ENCODE measurements at regions of chr1 and their contacts with region 1.

Region 1: GRCh38 chr1:7783826-7784491 is at the start of gene PER3:
- H3K4me3 Mint-ChIP-seq: peak within 1 kb of the TSS; percentile 82
- H3K27ac Mint-ChIP-seq: peak within 1 kb of the TSS; percentile 83
- H3K4me1 Mint-ChIP-seq: peaks cover 59% of the 10 kb centered on the region
- H3K27me3 Mint-ChIP-seq: no peaks in the 10 kb centered on the region

Region 2: GRCh38 chr1:7704214-7705047 is 79.5 kb before region 1 on chr1:
- intact Hi-C with region 1: no loop called
- H3K4me3 Mint-ChIP-seq: peak overlapping the region; percentile 76
- H3K27ac Mint-ChIP-seq: peak overlapping the region; percentile 78
- H3K4me1 Mint-ChIP-seq: peaks cover 7% of the 10 kb centered on the region
- H3K27me3 Mint-ChIP-seq: peaks cover 74% of the 10 kb centered on the region

Region 3: DNA sequence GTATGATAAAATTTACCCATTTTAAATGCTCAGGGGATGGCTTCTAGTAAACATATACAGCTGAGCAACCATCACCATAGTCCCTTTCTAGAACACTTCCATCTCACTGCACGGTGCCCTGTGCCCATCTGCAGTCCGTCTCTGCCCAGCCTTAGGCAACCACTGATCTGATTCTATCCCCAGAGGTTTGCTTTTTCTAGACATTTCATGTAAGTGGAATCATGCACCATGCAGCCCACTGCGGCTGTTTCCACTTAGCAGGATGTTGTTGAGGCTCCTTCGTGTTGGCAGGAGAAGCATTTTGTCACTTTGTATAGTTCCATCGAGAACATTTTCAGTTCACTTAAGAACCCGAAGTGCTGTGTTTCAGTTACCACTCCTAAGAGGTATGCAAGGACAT is 40.6 kb before region 1 on chr1:
- intact Hi-C with region 1: no loop called
- H3K4me3 Mint-ChIP-seq: no peak overlapping the region
- H3K27ac Mint-ChIP-seq: no peak overlapping the region
- H3K4me1 Mint-ChIP-seq: no peaks in the 10 kb centered on the region
- H3K27me3 Mint-ChIP-seq: no peaks in the 10 kb centered on the region

Region 4: GRCh38 chr1:7770997-7771822 is 12.7 kb before region 1 on chr1 and contains the start of gene VAMP3:
- intact Hi-C with region 1: loop called (anchors 1 kb)
- H3K4me3 Mint-ChIP-seq: peak within 1 kb of the TSS; percentile 94
- H3K27ac Mint-ChIP-seq: peak within 1 kb of the TSS; percentile 99
- H3K4me1 Mint-ChIP-seq: peaks cover 52% of the 10 kb centered on the region
- H3K27me3 Mint-ChIP-seq: no peaks in the 10 kb centered on the region

Region 5: DNA sequence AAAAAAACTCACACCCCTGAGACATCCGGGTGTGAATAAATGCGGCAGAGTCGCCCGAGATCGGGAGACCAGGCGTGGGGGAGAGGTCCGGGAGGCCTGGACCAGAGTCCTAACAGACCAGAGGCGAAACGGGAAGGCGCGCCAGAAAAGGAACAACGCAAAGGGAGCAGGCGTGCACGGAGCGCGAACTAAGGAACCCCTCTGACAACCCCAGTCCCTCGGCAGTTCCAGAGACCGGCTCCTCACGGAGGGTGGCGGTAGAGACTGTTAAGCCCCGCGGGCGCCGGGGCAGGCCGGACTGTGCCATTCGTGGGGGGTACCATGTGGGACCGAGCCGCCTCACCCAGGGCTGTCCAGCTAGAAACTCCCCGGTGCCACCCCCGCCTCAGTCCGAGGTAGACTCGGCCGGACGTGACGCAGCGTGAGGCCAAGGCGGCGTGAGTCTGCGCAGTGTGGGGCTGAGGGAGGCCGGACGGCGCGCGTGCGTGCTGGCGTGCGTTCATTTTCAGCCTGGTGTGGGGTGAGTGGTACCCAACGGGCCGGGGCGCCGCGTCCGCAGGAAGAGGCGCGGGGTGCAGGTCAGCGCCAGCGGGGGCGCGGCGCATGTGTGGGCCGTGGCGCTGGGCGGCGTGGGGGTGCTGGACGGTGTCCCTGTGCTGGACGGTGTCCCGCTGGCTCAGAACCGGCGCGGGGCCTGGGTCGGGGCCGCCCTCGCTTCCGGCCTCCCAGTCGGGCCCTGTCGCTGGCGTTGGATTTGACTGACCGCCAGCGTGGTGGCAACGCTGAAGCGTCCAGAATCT is 177.5 kb after region 1 on chr1 and contains the start of gene PARK7:
- intact Hi-C with region 1: loop called (anchors 5 kb)
- H3K4me3 Mint-ChIP-seq: peak within 1 kb of the TSS; percentile 96
- H3K27ac Mint-ChIP-seq: peak within 1 kb of the TSS; percentile 97
- H3K4me1 Mint-ChIP-seq: peaks cover 27% of the 10 kb centered on the region
- H3K27me3 Mint-ChIP-seq: no peaks in the 10 kb centered on the region

Region 6: DNA sequence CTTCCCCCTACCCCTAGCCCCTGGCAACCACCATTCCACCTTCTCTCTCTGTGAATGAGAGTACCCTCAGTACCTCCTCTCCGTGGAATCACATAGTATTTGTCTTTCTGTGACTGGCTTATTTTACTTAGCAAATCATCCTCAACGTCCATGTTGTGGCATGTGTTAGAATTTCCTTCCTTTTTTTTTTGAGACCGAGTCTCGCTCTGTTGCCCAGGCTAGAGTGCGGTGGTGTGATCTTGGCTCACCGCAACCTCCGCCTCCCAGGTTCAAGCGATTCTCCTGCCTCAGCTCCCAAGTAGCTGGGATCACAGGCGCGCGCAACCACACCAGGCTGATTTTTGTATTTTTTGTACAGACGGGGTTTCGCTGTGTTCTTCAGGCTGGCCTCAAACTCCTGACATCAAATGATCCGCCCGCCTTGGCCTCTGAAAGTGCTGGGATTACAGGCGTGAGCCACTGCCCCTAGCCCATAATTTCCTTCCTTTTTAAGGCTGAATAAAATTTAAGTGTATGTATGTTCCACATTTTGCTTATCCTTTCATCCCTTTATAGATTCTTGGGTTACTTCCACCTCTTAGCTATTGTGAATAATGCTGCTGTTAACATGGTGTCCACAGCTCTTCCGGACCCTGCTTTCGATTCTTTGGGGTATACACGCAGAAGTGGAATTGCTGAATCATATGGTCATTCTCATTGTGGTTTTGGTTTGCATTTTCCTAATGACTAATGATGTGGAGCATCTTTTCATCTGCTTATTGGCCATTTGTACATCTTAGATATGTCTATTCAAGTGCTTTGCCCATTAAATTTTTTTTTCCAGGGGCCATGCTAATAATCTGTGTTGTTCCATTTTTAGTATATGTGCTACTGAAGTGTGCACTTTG is 209.9 kb after region 1 on chr1:
- intact Hi-C with region 1: no loop called
- H3K4me3 Mint-ChIP-seq: no peak overlapping the region
- H3K27ac Mint-ChIP-seq: peak overlapping the region; percentile 68
- H3K4me1 Mint-ChIP-seq: peaks cover 22% of the 10 kb centered on the region
- H3K27me3 Mint-ChIP-seq: no peaks in the 10 kb centered on the region